Calu3 (cell line): ENCODE measurements at regions of chr7 and their contacts with region 1.

Region 1: DNA sequence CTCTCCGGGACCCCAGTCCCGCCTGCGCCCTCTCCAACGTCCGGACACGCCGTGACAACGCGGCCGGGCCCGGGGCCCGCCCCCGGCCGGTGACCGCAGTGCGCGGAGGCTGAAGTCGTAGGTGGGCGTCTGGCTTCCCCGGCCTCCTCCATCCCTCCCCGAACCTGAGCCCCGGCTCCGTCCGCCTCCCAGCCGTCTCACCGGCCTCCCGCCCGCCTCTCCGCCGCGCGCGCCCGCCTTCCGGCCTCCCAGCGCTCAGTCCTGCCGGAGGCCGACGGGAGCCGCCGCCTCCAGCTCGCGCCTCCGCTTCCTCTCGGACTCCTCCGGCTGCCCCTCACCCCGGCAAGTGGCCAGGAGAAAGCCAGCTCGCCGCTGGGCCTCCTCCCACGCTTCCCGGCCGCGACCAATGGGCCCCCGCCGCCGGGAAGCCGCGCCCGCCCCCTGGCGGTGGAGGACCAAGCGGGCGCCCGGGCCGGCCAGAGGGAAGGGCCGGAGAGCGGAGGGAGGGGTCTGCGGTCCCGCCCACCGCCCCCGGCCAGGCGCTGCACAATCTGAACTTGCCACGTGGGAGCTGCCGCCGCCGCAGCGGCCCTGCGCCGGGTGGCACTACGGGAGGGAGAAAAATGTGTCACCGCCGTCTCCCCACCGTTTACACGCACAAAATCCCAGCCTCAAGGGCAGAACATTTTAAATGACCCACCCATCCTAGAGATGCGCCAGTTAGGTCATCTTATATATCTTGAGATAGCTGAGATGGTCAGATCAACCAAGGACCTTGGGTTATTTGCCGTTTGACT is at the start of gene FAM3C:
- DNase-seq: peak; percentile 97
- H3K4me3 Mint-ChIP-seq: peak within 1 kb of the TSS; percentile 80
- H3K27ac Mint-ChIP-seq: peak within 1 kb of the TSS; percentile 72
- H3K4me1 Mint-ChIP-seq: peaks cover 25% of the 10 kb centered on the region
- H3K27me3 Mint-ChIP-seq: no peaks in the 10 kb centered on the region
- CTCF ChIP-seq: peak; percentile 93
- total RNA-seq, gene FAM3C: 178 and 206 TPM in 2 replicates

Region 2: GRCh38 chr7:121366852-121367431 is 29.2 kb before region 1 on chr7:
- CTCF ChIA-PET with region 1: interaction called, 8 read pairs
- intact Hi-C with region 1: loop called (anchors 2 kb)
- DNase-seq: peak; percentile 15
- H3K4me3 Mint-ChIP-seq: no peak overlapping the region
- H3K27ac Mint-ChIP-seq: no peak overlapping the region
- H3K4me1 Mint-ChIP-seq: peaks cover 28% of the 10 kb centered on the region
- H3K27me3 Mint-ChIP-seq: no peaks in the 10 kb centered on the region
- CTCF ChIP-seq: peak; percentile 39

Region 3: GRCh38 chr7:121372376-121373010 is 23.7 kb before region 1 on chr7:
- CTCF ChIA-PET with region 1: interaction called, 12 read pairs
- intact Hi-C with region 1: loop called (anchors 2 kb)
- DNase-seq: no peak
- H3K4me3 Mint-ChIP-seq: no peak overlapping the region
- H3K27ac Mint-ChIP-seq: no peak overlapping the region
- H3K4me1 Mint-ChIP-seq: peaks cover 54% of the 10 kb centered on the region
- H3K27me3 Mint-ChIP-seq: no peaks in the 10 kb centered on the region
- CTCF ChIP-seq: no peak

Region 4: DNA sequence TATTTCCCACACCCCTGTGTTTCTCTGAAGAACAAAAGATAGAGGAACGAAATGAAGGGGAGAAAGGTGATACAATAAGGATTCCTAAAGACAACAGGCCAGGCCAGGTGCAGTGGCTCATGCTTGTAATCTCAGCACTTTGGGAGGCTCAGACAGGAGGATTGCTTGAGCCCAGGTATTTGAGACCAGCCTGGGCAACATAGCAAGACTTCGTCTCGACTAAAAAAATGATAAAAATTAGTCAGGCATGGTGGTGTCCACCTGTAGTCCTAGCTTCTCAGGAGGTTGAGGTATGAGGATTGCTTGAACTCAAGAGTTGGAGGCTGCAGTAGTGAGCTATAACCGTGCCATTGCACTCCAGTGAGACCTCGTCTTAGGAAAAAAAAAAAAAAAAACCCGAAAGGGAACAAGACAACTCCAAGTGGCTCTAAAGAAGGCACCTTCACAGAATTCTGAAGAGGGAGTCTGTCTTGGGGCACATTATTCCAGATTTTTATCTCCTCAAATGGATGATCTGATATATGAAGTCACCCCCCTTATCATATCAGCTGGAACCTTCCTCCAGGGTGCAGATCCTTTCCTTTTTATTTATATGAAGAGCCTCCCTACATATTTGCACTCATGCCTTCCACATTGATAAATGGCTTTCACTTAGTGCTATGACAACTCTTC is 41.4 kb after region 1 on chr7:
- CTCF ChIA-PET with region 1: interaction called, 10 read pairs
- intact Hi-C with region 1: loop called (anchors 5 kb)
- DNase-seq: no peak
- H3K4me3 Mint-ChIP-seq: no peak overlapping the region
- H3K27ac Mint-ChIP-seq: peak overlapping the region; percentile 56
- H3K4me1 Mint-ChIP-seq: peaks cover 26% of the 10 kb centered on the region
- H3K27me3 Mint-ChIP-seq: no peaks in the 10 kb centered on the region
- CTCF ChIP-seq: no peak

Region 5: DNA sequence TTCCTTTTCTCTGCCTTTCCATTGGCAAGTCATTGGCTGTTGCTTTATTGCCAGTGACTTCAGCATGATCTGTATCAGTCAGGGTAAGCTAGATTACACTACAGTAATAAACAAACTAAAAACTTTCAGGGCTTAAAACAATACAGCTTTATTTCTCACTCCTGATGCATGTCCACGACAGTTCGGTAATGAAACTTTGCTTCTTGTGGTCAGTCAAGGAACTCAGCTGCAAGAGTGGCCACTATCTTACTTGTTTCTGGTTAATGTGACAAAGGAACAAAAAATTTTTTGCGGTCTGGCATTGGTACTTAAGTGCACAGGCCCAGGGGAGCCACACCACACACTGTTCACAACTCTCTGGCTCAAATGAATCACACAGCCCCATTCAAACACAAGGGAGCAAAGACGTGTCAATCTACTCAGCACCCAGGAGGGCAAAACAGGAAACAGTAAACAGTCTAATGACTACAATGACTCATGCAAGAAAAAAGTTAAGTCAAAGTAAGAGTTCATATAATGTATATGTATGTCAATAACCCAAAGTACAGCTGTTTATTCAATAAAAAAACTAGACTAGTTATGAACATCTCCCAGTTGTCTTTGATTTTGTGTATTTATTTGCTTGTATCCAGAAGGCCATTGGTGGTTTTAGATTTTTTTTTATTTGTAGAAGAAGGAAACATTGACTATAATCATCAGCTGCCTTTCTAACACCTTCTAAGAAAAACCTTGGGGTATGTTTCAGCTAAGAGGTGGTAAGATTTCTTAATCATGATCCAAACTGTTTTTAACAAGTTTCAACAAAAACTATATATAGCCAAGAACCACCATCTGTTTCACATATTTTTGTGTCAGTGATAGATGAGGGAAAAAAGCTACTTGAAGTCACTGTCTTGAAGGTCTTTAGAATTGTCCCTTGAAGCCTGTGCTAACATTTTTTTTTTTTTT is 134.3 kb after region 1 on chr7:
- CTCF ChIA-PET with region 1: interaction called, 11 read pairs
- intact Hi-C with region 1: no loop called
- DNase-seq: peak; percentile 80
- H3K4me3 Mint-ChIP-seq: peak overlapping the region; percentile 55
- H3K27ac Mint-ChIP-seq: peak overlapping the region; percentile 98
- H3K4me1 Mint-ChIP-seq: peaks cover 32% of the 10 kb centered on the region
- H3K27me3 Mint-ChIP-seq: no peaks in the 10 kb centered on the region
- CTCF ChIP-seq: no peak

Region 6: GRCh38 chr7:121916211-121916610 is 520.1 kb after region 1 on chr7:
- CTCF ChIA-PET with region 1: no interaction called
- intact Hi-C with region 1: no loop called
- DNase-seq: no peak
- H3K4me3 Mint-ChIP-seq: no peak overlapping the region
- H3K27ac Mint-ChIP-seq: no peak overlapping the region
- H3K4me1 Mint-ChIP-seq: no peaks in the 10 kb centered on the region
- H3K27me3 Mint-ChIP-seq: no peaks in the 10 kb centered on the region
- CTCF ChIP-seq: no peak